ENCODE measurements at regions of chr12 and their contacts with region 1.

Region 1: GRCh38 chr12:87344699-87345098 is 684.5 kb downstream of the C12orf50 start:
- DNase-seq: no peak
- H3K4me3 Mint-ChIP-seq: no peak overlapping the region
- H3K27ac Mint-ChIP-seq: no peak overlapping the region
- H3K4me1 Mint-ChIP-seq: no peaks in the 10 kb centered on the region
- H3K27me3 Mint-ChIP-seq: no peaks in the 10 kb centered on the region
- CTCF ChIP-seq: no peak

Region 2: GRCh38 chr12:86914716-86915115 is 430.0 kb before region 1 on chr12:
- CTCF ChIA-PET with region 1: no interaction called
- intact Hi-C with region 1: loop called (anchors 5 kb)
- DNase-seq: peak; percentile 56
- H3K4me3 Mint-ChIP-seq: no peak overlapping the region
- H3K27ac Mint-ChIP-seq: no peak overlapping the region
- H3K4me1 Mint-ChIP-seq: no peaks in the 10 kb centered on the region
- H3K27me3 Mint-ChIP-seq: no peaks in the 10 kb centered on the region
- CTCF ChIP-seq: peak; percentile 44